ENCODE measurements at regions of chr7 and their contacts with region 1.

Region 1: GRCh38 chr7:134761266-134761665 is 18.2 kb upstream of the CALD1 start:
- DNase-seq: no peak
- ATAC-seq: no peak
- H3K4me3 ChIP-seq: no peak overlapping the region
- H3K27ac ChIP-seq: peak overlapping the region in 1 of 2 donors; percentile 49
- H3K4me1 ChIP-seq: peaks cover 5 to 15% of the 10 kb centered on the region in 2 donors
- H3K27me3 ChIP-seq: no peaks in the 10 kb centered on the region

Region 2: GRCh38 chr7:134724606-134725005 is 36.7 kb before region 1 on chr7:
- intact Hi-C with region 1: loop called in 1 of 2 experiments (anchors 2 kb)
- DNase-seq: no peak
- ATAC-seq: peak; percentile 37
- H3K4me3 ChIP-seq: no peak overlapping the region
- H3K27ac ChIP-seq: peak overlapping the region; percentile 19 to 28
- H3K4me1 ChIP-seq: peaks cover 6 to 30% of the 10 kb centered on the region in 2 donors
- H3K27me3 ChIP-seq: no peaks in the 10 kb centered on the region

Measured in aorta (tissue), 5 donors.